ENCODE measurements at regions of chr1 and their contacts with region 1.

Region 1: DNA sequence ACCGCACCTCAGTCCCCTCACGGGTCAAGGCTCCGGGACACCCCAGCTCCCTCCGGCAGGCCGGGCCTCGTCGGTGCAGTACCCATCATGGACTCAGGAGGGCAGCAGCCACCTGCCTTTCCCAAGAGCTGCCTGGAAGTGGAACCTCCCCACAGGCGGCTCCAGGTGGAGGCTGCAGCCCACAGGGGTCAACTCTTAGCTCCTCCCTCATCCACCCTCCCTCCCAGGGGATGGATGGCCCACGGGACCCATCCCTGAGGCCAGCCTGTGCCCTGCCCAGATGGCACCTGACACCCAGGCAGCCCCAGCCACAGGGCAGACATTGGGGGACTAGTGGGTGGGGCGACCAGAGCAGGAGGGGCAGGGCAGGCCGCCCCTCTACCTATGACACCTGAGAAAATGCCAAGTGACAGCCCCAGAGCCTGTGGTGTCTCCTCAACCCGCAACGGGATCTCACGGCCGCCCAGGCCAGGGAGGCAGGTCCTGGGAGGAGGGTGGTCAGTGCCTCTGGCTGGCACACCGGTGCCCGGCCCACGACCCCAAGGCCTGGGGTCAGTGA is 1.2 kb upstream of the ARHGEF16 start:
- DNase-seq: peak; percentile 80 to 82
- H3K4me3 ChIP-seq: no peak overlapping the region
- H3K27ac ChIP-seq: peak overlapping the region; percentile 23 to 81 (median 81)
- H3K4me1 ChIP-seq: peaks cover 10 to 12% of the 10 kb centered on the region in 2 donors
- H3K27me3 ChIP-seq: no peaks in the 10 kb centered on the region
- CTCF ChIP-seq: peak; percentile 84 to 98 (median 94)
- POLR2A ChIP-seq: no peak

Region 2: GRCh38 chr1:3113047-3113740 is 340.1 kb before region 1 on chr1:
- intact Hi-C with region 1: no loop called
- DNase-seq: peak; percentile 58 to 62
- H3K4me3 ChIP-seq: peak overlapping the region in 1 of 3 donors; percentile 15
- H3K27ac ChIP-seq: peak overlapping the region; percentile 76 to 88 (median 81)
- H3K4me1 ChIP-seq: peaks cover 15 to 25% of the 10 kb centered on the region in 2 donors
- H3K27me3 ChIP-seq: no peaks in the 10 kb centered on the region
- CTCF ChIP-seq: no peak
- POLR2A ChIP-seq: no peak

Region 3: GRCh38 chr1:3219005-3219790 is 234.1 kb before region 1 on chr1:
- intact Hi-C with region 1: no loop called
- DNase-seq: peak; percentile 92 to 94
- H3K4me3 ChIP-seq: no peak overlapping the region
- H3K27ac ChIP-seq: peak overlapping the region in 1 of 3 donors; percentile 33
- H3K4me1 ChIP-seq: peaks cover 45 to 50% of the 10 kb centered on the region in 2 donors
- H3K27me3 ChIP-seq: no peaks in the 10 kb centered on the region
- CTCF ChIP-seq: no peak
- POLR2A ChIP-seq: no peak

Region 4: DNA sequence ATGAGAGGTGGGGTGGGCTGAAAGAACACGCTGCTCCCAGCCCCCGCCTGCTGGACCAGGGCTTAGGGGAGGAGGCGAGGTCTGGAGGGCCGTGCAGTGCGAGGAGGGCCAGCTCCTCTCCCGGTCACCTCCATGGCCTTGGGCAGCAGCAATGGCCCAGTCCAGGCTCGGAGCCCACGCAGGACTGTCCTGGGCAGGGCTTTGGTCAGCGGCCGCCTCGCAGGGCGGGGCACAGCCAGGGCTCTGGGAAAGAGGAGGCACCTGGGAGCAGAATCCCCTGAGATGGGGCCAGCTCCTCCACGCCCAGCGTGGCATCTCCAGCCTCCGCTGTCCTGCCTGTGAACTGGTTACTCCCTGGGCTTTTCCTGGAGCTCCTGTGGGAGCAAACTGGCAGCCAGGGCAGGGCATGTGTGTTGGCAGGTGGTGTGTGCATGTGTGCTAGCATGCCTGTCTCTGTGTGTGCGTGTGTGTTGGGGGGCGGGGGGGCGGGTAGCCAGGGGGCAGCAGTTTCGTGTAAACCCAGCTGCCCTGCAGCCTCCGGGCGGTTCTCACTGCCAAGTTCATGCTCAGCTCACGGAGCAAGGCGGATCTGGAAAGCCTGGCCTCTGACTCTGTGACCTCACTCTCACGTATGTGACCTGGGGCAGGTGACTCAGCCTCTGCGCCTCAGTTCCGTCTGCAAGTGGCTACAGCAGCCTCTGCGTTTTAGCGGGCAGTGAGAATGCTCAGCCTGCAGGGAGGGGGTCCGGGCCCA is 28.7 kb after region 1 on chr1:
- intact Hi-C with region 1: loop called (anchors 2 kb)
- DNase-seq: no peak
- H3K4me3 ChIP-seq: no peak overlapping the region
- H3K27ac ChIP-seq: no peak overlapping the region
- H3K4me1 ChIP-seq: no peaks in the 10 kb centered on the region
- H3K27me3 ChIP-seq: no peaks in the 10 kb centered on the region
- CTCF ChIP-seq: no peak
- POLR2A ChIP-seq: no peak

Region 5: DNA sequence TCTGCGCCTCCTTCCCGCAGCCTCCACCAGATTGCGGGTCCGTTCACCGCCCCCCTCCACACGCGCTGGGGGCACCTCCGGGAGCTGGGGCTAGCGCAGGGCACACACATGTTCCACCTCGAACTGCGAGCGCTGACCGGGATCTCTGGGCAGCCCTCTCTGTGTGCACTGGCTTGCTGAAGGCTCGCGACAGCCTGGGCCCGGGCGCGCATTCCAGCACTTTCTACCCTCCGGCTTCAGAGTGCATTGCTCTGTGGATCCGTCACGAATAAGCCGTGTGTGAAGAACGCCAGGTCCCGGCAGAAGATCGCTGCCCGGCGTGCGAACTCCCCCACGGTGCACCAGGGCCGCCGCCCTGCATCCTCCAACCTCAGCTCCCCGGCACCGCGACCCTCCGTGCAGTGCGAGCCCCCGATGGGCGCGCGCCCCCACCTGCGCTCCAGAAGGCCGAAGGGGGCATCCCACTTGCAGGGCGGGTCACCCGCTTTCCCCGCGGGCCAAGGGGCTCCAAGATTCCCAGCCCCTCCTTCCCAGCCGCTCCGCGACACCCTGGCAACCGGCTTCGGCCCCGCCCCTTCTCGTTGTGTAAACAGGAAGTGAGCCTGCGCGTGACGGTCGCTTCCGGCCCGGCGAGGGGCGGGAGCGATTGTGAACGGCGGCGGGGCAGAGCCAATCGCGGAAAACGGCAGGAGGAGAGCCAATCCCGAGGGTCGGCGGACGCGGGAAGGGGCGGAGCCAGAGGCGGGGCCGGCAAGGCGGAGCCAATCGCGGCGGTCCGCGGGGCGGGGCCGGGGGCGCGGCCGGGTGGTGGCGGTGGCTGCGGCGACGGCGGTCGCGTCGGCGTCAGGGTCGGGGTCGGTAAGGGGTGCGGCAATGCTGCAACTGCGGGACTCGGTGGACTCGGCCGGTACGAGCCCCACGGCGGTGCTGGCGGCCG is 171.2 kb after region 1 on chr1 and contains the start of gene TPRG1L:
- intact Hi-C with region 1: loop called (anchors 5 kb)
- DNase-seq: peak; percentile 98 to 99
- H3K4me3 ChIP-seq: peak within 1 kb of the TSS; percentile 75 to 97 (median 94)
- H3K27ac ChIP-seq: peak within 1 kb of the TSS in 2 of 3 donors; percentile 58 to 66
- H3K4me1 ChIP-seq: peaks cover 20 to 28% of the 10 kb centered on the region in 2 donors
- H3K27me3 ChIP-seq: no peaks in the 10 kb centered on the region
- CTCF ChIP-seq: no peak
- POLR2A ChIP-seq: peak in 1 of 2 donors; percentile 80
- total RNA-seq, gene TPRG1L: 33.9 to 45.1 (median 40.0) TPM

Region 6: DNA sequence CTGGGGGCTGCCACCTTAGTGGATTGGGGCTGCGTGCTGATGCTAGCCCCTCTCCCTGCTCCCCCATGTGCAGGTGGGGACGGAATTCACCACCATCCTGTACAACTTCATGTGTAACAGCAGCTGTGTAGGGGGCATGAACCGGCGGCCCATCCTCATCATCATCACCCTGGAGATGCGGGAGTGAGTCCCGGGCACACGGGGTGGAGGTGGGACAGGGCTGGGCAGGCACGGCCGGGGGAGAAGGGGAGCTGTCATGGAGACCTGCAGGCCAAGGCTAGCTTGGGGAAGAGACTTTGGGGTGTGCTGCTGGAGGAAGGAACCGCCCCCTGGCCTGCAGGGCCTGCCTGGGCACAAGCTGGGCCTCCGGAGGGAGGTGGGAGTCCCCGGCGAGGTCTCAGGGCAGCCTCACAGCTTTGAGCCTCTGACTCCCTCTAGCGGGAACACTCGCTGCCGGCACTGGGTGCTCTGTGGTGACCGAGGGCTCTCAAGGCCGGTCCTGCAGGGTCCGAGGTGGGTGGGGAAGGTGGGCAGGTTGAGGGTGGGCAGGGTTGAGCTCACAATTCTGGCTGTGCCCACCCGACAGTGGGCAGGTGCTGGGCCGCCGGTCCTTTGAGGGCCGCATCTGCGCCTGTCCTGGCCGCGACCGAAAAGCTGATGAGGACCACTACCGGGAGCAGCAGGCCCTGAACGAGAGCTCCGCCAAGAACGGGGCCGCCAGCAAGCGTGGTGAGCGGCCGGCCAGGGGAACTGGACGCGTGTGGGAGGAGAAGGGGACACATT is 274.0 kb after region 1 on chr1:
- intact Hi-C with region 1: loop called (anchors 10 kb)
- DNase-seq: peak; percentile 17 to 26
- H3K4me3 ChIP-seq: no peak overlapping the region
- H3K27ac ChIP-seq: no peak overlapping the region
- H3K4me1 ChIP-seq: peaks cover 0 to 12% of the 10 kb centered on the region in 2 donors
- H3K27me3 ChIP-seq: no peaks in the 10 kb centered on the region
- CTCF ChIP-seq: peak in 2 of 6 experiments; percentile 16 to 41
- POLR2A ChIP-seq: no peak

Region 7: GRCh38 chr1:3796215-3797061 is 343.2 kb after region 1 on chr1 and contains the start of gene LRRC47:
- intact Hi-C with region 1: loop called (anchors 5 kb)
- DNase-seq: peak; percentile 94 to 95
- H3K4me3 ChIP-seq: peak within 1 kb of the TSS; percentile 45 to 93 (median 80)
- H3K27ac ChIP-seq: peak within 1 kb of the TSS in 2 of 3 donors; percentile 25 to 41
- H3K4me1 ChIP-seq: peaks cover 29 to 30% of the 10 kb centered on the region in 2 donors
- H3K27me3 ChIP-seq: no peaks in the 10 kb centered on the region
- CTCF ChIP-seq: no peak
- POLR2A ChIP-seq: peak in 1 of 2 donors; percentile 76
- total RNA-seq, gene LRRC47: 38.7 to 45.2 (median 43.7) TPM

Measured in thyroid gland (tissue), 4 donors.